AG04450 (cell line): ENCODE measurements at regions of chr2 and their contacts with region 1.

Region 1: DNA sequence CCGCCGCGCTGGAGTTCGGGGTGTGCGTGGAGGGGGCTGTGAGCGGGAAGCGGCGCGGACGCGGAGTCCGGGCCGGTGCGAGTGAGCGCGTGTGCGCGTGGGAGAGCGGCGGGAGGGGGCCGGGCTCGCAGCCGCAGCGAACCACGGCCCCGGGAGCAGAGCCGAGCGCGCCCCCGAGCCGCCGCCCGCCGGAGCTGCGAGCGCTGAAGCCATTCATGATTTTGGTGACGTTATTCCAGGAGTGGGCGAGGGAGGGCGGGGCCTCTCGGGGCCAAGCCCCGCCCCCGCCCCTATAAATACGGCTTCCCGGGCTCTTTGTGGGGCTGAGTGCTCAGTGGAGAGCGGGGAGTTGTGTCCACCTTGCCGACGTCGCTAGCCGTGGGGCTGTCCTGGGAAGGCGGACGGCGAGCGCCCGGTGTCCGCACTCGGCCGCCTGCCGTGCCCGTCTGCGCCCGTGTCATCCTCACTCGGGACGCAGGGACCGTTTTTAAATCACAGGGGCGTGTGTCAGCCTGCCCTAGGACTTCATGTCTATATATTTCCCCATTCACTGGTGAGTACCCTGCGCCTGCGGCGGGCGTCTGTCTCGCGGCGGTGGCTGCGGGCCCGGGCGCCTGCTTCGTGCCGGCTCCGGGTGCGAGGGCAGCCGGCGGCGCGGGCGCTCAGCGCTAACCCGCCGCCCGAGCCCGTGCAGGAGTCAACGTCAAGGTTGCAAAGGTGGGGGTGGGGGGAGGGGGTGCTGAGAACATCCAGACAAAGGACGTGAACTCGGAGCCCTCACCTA is at the start of gene LBH:
- DNase-seq: peak; percentile 85
- H3K4me3 ChIP-seq: peak within 1 kb of the TSS; percentile 89
- H3K27ac ChIP-seq: peak within 1 kb of the TSS; percentile 65
- H3K27me3 ChIP-seq: no peaks in the 10 kb centered on the region
- CTCF ChIP-seq: no peak
- polyA plus RNA-seq, gene LBH: 381 and 463 TPM in 2 replicates

Region 2: GRCh38 chr2:30201990-30202389 is 29.4 kb before region 1 on chr2:
- CTCF ChIA-PET with region 1: interaction called, 33 read pairs
- POLR2A ChIA-PET with region 1: interaction called, 10 read pairs
- DNase-seq: no peak
- H3K4me3 ChIP-seq: no peak overlapping the region
- H3K27ac ChIP-seq: no peak overlapping the region
- H3K27me3 ChIP-seq: peaks cover 13% of the 10 kb centered on the region
- CTCF ChIP-seq: no peak

Region 3: GRCh38 chr2:30245364-30245763 is 14.0 kb after region 1 on chr2:
- CTCF ChIA-PET with region 1: interaction called, 16 read pairs
- POLR2A ChIA-PET with region 1: interaction called, 14 read pairs
- DNase-seq: no peak
- H3K4me3 ChIP-seq: no peak overlapping the region
- H3K27ac ChIP-seq: no peak overlapping the region
- H3K27me3 ChIP-seq: no peaks in the 10 kb centered on the region
- CTCF ChIP-seq: no peak

Region 4: DNA sequence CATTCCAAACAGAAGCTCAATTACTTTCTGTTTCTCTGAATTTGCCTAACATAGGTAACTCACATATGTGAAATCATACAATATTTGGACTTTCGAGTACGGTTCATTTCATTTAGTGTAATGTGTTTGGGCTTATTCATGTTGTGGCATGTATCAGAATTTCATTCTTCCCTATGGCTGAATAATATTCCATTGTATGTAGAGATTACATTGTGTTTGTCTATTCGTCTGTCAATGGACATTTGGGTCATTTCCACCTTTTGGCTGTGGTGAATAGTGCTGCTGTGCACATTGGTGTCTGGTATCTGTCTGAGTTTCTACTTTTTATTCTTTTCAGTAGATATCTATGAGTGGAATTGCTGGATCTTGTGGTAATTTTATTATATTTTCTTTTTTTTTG is 43.9 kb after region 1 on chr2:
- CTCF ChIA-PET with region 1: no interaction called
- POLR2A ChIA-PET with region 1: interaction called, 11 read pairs
- DNase-seq: no peak
- H3K4me3 ChIP-seq: no peak overlapping the region
- H3K27ac ChIP-seq: no peak overlapping the region
- H3K27me3 ChIP-seq: no peaks in the 10 kb centered on the region
- CTCF ChIP-seq: no peak

Region 5: GRCh38 chr2:30293303-30293921 is 62.0 kb after region 1 on chr2:
- CTCF ChIA-PET with region 1: no interaction called
- POLR2A ChIA-PET with region 1: interaction called, 42 read pairs
- DNase-seq: peak; percentile 98
- H3K4me3 ChIP-seq: no peak overlapping the region
- H3K27ac ChIP-seq: peak overlapping the region; percentile 96
- H3K27me3 ChIP-seq: no peaks in the 10 kb centered on the region
- CTCF ChIP-seq: no peak

Region 6: DNA sequence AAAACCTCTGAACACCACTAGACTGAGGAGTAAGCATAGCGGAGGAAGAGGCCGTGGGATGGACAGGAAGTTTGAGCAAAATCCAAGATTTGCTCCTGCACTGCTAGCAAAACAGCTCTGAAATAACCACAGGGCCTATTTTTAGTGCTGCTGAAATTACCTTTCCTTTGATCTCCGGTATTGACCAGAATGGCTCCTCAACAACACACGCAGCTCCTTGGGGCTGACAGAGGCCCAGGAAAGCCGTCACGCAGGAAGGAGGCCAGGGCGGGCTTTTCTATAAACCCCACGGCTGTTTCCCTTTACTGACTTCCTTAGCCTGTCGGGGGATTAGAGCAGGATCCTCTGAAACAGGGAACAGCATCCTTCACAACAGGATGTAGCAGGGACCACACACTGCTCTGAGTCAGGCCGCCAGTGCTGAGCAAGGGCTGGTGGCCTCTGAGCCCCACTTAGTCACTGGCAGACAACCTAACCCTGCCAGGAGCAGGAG is 134.8 kb after region 1 on chr2:
- CTCF ChIA-PET with region 1: no interaction called
- POLR2A ChIA-PET with region 1: interaction called, 12 read pairs
- DNase-seq: no peak
- H3K4me3 ChIP-seq: no peak overlapping the region
- H3K27ac ChIP-seq: peak overlapping the region; percentile 77
- H3K27me3 ChIP-seq: no peaks in the 10 kb centered on the region
- CTCF ChIP-seq: no peak